Tibial artery (tissue), 4 donors: ENCODE measurements at regions of chr4 and their contacts with region 1.

Region 1: GRCh38 chr4:102868781-102869568 is at the start of gene CISD2:
- DNase-seq: peak; percentile 90 to 96
- H3K4me3 ChIP-seq: peak within 1 kb of the TSS; percentile 64 to 72
- H3K27ac ChIP-seq: peak within 1 kb of the TSS; percentile 93 to 97
- H3K4me1 ChIP-seq: peaks cover 0 to 29% (median 2%) of the 10 kb centered on the region in 4 donors
- H3K27me3 ChIP-seq: no peaks in the 10 kb centered on the region
- CTCF ChIP-seq: peak in 1 of 2 experiments; percentile 15

Region 2: DNA sequence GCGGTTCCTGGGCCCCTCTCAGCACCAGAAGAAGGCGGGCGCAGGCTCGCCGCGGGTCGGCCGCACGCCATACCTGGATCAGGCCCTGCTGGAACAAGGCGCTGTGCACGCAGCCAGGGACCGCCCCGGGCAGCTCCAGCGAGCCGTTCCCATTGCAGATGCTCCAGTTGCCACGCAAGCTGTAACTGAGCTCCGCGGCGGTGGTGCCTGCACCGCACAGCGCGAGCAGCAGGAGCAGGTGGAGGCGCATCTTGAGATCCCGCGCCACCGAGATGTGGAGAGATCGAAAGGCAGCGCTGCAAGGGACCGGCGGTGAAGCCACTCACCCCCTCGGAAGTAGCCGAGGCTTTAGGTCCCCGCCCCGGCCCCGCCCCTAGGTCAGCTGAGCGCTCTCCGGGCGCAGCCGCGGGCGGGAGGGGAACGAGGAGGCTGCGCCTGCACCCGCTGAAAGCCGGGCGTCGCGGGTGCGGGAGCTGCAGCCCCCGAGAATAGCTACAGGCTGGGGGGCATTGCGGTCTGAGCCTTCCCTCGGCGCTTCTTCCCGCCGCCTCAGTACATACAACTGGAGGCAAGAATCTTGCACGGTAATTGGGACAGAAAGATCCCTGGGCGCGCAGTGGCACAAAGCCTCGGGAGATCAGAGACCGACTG is 108.2 kb before region 1 on chr4 and contains the start of gene MANBA:
- intact Hi-C with region 1: loop called (anchors 2 kb)
- DNase-seq: peak; percentile 80 to 92
- H3K4me3 ChIP-seq: peak within 1 kb of the TSS; percentile 90 to 91
- H3K27ac ChIP-seq: peak within 1 kb of the TSS; percentile 78
- H3K4me1 ChIP-seq: peaks cover 0 to 18% (median 8%) of the 10 kb centered on the region in 4 donors
- H3K27me3 ChIP-seq: no peaks in the 10 kb centered on the region
- CTCF ChIP-seq: no peak

Region 3: GRCh38 chr4:102826890-102827673 is 41.9 kb before region 1 on chr4 and contains the start of gene UBE2D3:
- intact Hi-C with region 1: loop called (anchors 1 kb)
- DNase-seq: peak; percentile 92 to 96
- H3K4me3 ChIP-seq: peak within 1 kb of the TSS; percentile 75 to 76
- H3K27ac ChIP-seq: peak within 1 kb of the TSS; percentile 99 to 100
- H3K4me1 ChIP-seq: peaks cover 0 to 31% (median 13%) of the 10 kb centered on the region in 4 donors
- H3K27me3 ChIP-seq: no peaks in the 10 kb centered on the region
- CTCF ChIP-seq: no peak

Region 4: DNA sequence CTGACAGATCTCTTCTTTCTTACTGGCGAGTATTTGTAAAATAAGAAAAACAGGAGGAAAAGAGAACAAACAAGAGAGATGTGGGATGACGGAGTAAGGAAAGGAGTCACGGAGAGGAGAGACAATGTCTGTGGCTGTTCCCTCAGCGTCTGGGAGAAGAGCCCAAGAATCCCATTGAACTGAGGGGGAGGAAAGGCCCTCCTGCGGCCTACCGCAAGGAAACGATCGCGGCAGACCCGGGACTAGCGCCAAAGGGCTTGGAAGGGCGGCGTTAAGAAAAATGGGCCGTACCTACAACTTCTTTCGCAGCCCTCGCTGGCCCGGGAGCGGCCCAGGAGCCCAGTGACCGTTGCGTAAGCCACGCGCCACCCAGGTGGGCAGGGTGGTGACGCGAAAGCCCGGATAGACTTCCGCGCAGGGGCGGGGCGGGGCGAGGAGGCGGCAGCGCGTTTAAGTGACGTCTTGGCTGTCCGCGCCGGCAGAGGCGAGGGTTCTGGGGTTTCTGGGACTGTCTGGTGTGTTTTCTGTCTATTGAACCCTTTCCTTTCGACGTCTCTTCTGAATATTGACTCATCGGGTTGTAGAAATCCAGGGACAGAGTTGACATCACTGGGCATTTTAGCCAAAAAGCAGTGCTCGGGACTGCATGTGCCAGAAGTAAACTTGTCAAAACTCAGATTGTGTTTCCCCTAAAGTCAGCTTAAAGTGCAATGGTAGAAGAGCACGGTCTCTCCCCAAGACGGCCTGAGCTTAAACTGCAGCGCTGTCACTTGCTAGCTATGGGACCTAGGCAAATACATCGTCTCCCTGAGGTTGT is 150.5 kb after region 1 on chr4 and contains the start of gene SLC9B1:
- intact Hi-C with region 1: loop called (anchors 5 kb)
- DNase-seq: peak; percentile 97 to 98
- H3K4me3 ChIP-seq: peak within 1 kb of the TSS; percentile 54 to 55
- H3K27ac ChIP-seq: peak within 1 kb of the TSS; percentile 86 to 92
- H3K4me1 ChIP-seq: peaks cover 0 to 7% (median 3%) of the 10 kb centered on the region in 4 donors
- H3K27me3 ChIP-seq: no peaks in the 10 kb centered on the region
- CTCF ChIP-seq: no peak